Activated T-helper 1 cell treated with anti-CD3 and anti-CD28 coated beads, Interleukin-12 subunit alpha, Interleukin-12 subunit beta, Interleukin-2, Interleukin-4 antibody, amounts not matched to agents 30 ng/mL and 10 ng/mL and 1 ng/mL, durations not matched to agents 14 hours and 24 hours and 36 hours (primary cell): ENCODE measurements at regions of chr9 and their contacts with region 1.

Region 1: DNA sequence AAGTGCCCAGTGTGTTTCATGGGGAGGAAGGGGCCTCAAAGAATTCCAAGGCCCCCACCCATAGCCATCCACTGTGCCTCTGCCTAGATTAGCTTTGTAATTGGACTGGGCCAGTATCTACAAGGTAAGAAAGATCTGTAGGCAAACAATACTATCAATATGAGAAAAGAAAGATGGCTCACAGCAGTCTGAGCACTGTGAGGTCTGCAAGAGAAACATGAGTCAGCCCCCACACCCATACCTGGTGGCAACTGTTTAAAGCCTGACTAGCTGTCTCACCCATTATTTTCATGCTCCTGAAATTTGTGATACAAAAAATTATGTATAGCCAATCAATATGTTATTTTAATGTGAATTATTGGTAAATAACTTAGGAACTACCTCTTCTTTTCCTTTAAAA is 10.0 kb upstream of the ZNF483 start:
- DNase-seq: no peak
- H3K4me3 Mint-ChIP-seq: no peak overlapping the region
- H3K27ac Mint-ChIP-seq: no peak overlapping the region
- H3K4me1 Mint-ChIP-seq: no peaks in the 10 kb centered on the region
- H3K27me3 Mint-ChIP-seq: peaks cover 1% of the 10 kb centered on the region

Region 2: DNA sequence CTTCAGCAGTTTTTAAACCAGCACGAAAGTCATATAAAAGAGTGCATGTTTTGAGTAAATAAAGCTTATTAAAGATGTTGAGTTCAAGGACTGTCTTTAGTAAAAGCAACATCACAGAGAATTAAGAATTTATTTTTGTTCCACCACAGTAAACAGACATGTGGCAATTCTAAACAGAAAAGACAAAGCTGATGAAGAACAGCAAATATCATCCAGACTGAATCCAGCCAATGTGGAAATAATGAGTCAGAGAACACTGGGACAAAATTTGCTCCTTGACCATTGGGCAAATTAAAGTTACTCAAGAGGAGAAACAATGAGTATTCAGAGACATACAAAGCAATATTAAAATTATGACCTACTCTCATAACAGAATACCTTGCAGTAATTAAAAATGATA is 213.8 kb before region 1 on chr9:
- intact Hi-C with region 1: no loop called
- DNase-seq: no peak
- H3K4me3 Mint-ChIP-seq: no peak overlapping the region
- H3K27ac Mint-ChIP-seq: no peak overlapping the region
- H3K4me1 Mint-ChIP-seq: peaks cover 3% of the 10 kb centered on the region
- H3K27me3 Mint-ChIP-seq: peaks cover 7% of the 10 kb centered on the region

Region 3: GRCh38 chr9:112241516-112241915 is 726.5 kb after region 1 on chr9:
- intact Hi-C with region 1: loop called (anchors 5 kb)
- DNase-seq: no peak
- H3K4me3 Mint-ChIP-seq: no peak overlapping the region
- H3K27ac Mint-ChIP-seq: no peak overlapping the region
- H3K4me1 Mint-ChIP-seq: peaks cover 18% of the 10 kb centered on the region
- H3K27me3 Mint-ChIP-seq: no peaks in the 10 kb centered on the region